Prostate gland (tissue), 2 donors: ENCODE measurements at regions of chr17 and their contacts with region 1.

Region 1: DNA sequence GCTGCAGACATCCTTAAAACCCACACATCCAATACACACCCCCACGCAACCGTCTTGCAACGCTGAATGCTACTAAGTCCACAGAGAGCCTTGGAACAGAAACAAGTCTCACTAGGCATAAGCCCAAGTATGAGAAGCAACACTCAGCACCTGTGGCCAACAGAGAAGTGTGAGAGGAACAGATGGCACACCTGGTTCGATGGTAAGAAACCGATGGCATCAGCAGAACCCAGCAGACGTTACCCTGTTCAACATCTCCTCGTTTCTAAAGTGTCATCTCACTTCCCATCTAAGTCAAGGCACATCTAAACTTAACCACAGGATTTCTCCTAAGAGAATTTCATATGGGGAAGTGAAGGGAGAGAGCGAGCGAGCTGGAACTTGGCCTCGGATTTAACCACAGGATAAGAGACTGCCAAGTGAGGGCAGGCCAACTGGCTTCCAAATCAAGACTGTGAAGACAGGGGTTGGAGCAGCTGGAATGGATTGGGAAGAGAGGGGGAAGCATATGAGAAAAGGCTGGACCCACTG is 41.0 kb downstream of the NXPH3 start:
- DNase-seq: no peak
- H3K4me3 ChIP-seq: no peak overlapping the region
- H3K27ac ChIP-seq: peak overlapping the region in 1 of 2 donors; percentile 56
- H3K4me1 ChIP-seq: peaks cover 7% of the 10 kb centered on the region
- H3K27me3 ChIP-seq: no peaks in the 10 kb centered on the region
- CTCF ChIP-seq: no peak
- POLR2A ChIP-seq: no peak

Region 2: GRCh38 chr17:49575579-49576087 is 41.0 kb before region 1 on chr17 and contains the start of gene NXPH3:
- intact Hi-C with region 1: loop called (anchors 5 kb)
- DNase-seq: peak; percentile 54
- H3K4me3 ChIP-seq: peak within 1 kb of the TSS; percentile 50 to 58
- H3K27ac ChIP-seq: peak within 1 kb of the TSS; percentile 67 to 77
- H3K4me1 ChIP-seq: no peaks in the 10 kb centered on the region
- H3K27me3 ChIP-seq: no peaks in the 10 kb centered on the region
- CTCF ChIP-seq: peak; percentile 40 to 89 (median 70)
- POLR2A ChIP-seq: no peak
- total RNA-seq, gene NXPH3: 4.7 to 15.5 TPM